ENCODE measurements at regions of chr7 and their contacts with region 1.

Region 1: GRCh38 chr7:3230908-3231307 is 70.1 kb upstream of the SDK1 start:
- DNase-seq: no peak
- ATAC-seq: no peak
- H3K4me3 ChIP-seq: no peak overlapping the region
- H3K4me3 Mint-ChIP-seq: no peak overlapping the region
- H3K27ac ChIP-seq: no peak overlapping the region
- H3K27ac Mint-ChIP-seq: no peak overlapping the region
- H3K4me1 ChIP-seq: peaks cover 0 to 6% of the 10 kb centered on the region in 2 donors
- H3K4me1 Mint-ChIP-seq: peaks cover 0 to 48% (median 31%) of the 10 kb centered on the region in 7 donors
- H3K27me3 ChIP-seq: no peaks in the 10 kb centered on the region
- H3K27me3 Mint-ChIP-seq: peaks cover 0 to 9% (median 4%) of the 10 kb centered on the region in 5 donors

Region 2: DNA sequence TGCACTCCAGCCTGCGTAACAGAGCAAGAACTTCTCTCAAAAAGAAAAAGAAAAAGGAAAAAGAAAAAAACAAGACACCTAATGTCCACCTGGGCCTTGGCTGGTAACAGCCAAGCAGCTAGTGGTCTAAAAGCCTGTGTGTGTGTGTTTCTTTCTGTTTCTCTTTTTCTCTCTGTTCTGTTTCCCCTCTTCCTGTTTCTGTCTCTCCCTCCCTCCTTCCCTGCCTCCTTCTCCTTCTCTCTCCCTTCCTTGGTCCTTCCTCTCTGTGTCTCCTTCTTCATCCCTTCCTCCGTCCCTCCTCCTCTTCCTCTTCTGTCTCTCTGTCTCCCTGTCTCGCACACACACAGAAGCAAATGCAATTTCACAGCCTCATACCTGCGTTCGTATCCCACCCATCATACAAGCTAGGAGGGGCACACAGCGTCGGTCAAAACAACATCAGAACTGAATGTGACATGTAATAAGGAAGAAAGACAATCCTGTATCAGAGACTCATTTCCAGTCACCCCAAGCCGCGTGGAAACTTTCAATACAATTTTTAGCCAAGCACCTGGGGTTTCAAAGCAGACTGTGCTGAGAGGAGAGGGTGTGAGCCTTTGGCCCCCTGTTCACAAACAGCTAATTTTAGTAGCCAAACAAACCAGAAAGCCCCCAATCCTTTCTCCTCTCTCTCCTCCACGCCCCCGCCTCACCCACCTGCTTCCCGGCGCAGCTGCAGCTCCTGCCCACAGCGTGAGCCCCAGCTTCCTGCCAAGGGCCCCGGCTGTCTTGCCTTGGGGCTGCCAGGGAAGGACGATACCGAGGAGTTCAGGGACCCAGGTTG is 336.6 kb before region 1 on chr7:
- CTCF ChIA-PET with region 1: interaction called, 10 read pairs
- POLR2A ChIA-PET with region 1: no interaction called
- intact Hi-C with region 1: no loop called
- DNase-seq: peak in 7 of 9 donors; percentile 30 to 74 (median 41)
- ATAC-seq: peak; percentile 72
- H3K4me3 ChIP-seq: peak overlapping the region; percentile 54
- H3K4me3 Mint-ChIP-seq: peak overlapping the region; percentile 75 to 93 (median 82)
- H3K27ac ChIP-seq: peak overlapping the region; percentile 42
- H3K27ac Mint-ChIP-seq: peak overlapping the region; percentile 0 to 92 (median 70)
- H3K4me1 ChIP-seq: peaks cover 10 to 11% of the 10 kb centered on the region in 2 donors
- H3K4me1 Mint-ChIP-seq: peaks cover 9 to 29% (median 21%) of the 10 kb centered on the region in 7 donors
- H3K27me3 ChIP-seq: no peaks in the 10 kb centered on the region
- H3K27me3 Mint-ChIP-seq: no peaks in the 10 kb centered on the region

Region 3: GRCh38 chr7:3162289-3162688 is 68.6 kb before region 1 on chr7:
- CTCF ChIA-PET with region 1: no interaction called
- POLR2A ChIA-PET with region 1: no interaction called
- intact Hi-C with region 1: no loop called
- DNase-seq: no peak
- ATAC-seq: peak; percentile 26
- H3K4me3 ChIP-seq: no peak overlapping the region
- H3K4me3 Mint-ChIP-seq: no peak overlapping the region
- H3K27ac ChIP-seq: no peak overlapping the region
- H3K27ac Mint-ChIP-seq: no peak overlapping the region
- H3K4me1 ChIP-seq: no peaks in the 10 kb centered on the region
- H3K4me1 Mint-ChIP-seq: peaks cover 0 to 8% (median 0%) of the 10 kb centered on the region in 7 donors
- H3K27me3 ChIP-seq: no peaks in the 10 kb centered on the region
- H3K27me3 Mint-ChIP-seq: peaks cover 0 to 5% (median 0%) of the 10 kb centered on the region in 5 donors